Endothelial cell of umbilical vein (primary cell): ENCODE measurements at regions of chr17 and their contacts with region 1.

Region 1: GRCh38 chr17:9606453-9606852 is 30.0 kb downstream of the CFAP52 start:
- DNase-seq: no peak
- H3K4me3 ChIP-seq: no peak overlapping the region
- H3K27ac ChIP-seq: no peak overlapping the region
- H3K4me1 ChIP-seq: no peaks in the 10 kb centered on the region
- H3K27me3 ChIP-seq: no peaks in the 10 kb centered on the region
- CTCF ChIP-seq: no peak
- POLR2A ChIP-seq: no peak

Region 2: GRCh38 chr17:9587969-9588656 is 18.3 kb before region 1 on chr17:
- CTCF ChIA-PET with region 1: no interaction called
- POLR2A ChIA-PET with region 1: no interaction called
- dilution Hi-C with region 1: no loop called
- intact Hi-C with region 1: loop called (anchors 1 kb)
- DNase-seq: no peak
- H3K4me3 ChIP-seq: no peak overlapping the region
- H3K27ac ChIP-seq: no peak overlapping the region
- H3K4me1 ChIP-seq: no peaks in the 10 kb centered on the region
- H3K27me3 ChIP-seq: no peaks in the 10 kb centered on the region
- CTCF ChIP-seq: no peak
- POLR2A ChIP-seq: no peak